Activated CD8-positive, alpha-beta T cell treated with anti-CD3 and anti-CD28 coated beads for 36 hours (primary cell): ENCODE measurements at regions of chr16 and their contacts with region 1.

Region 1: DNA sequence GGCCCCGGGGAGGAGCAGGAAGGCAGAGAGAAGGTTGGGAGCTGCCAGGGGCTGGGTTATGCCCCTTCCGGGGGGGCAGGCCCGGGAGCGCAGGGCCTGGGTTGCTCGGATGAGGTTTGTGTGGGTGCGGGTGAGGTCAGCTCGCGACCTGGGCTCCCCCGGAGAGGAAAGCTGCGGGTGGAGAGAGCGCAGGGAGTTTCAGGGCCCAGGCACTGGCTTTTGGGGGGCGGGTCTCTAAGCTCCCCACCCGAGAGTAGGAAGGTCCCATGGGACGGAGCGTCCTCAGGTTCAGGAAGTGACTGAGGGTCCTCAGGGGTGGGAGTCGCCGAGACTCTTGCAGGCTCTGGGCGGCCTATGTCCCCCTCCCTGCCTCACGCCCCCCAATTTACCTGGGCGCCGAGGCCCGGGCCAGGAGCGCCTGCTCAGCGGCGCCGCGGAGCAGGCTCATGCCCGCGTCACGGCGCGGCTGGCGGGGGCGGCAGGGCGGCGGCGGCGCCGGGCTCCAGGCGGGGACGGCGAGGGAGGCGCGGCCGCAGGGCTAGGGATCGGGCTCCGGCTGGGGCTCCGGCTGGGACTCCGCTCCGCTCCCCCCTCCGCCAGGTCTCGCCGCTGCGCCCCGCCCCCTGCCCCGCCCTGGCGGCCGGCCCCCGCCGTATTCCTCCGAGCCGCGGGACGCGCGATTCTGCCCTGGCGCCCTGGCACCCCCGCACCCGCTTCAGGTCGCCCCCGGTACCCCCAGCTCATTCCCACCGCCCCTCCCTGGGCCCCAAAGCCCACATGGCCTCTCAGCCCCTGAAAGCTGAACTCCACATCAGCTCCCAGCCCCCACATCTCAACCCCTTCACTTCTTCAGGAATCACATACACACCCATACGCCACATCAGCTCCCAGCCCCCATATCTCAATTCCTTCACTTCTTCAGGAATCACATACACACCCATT is at the start of gene DOK4:
- DNase-seq: peak; percentile 81
- ATAC-seq: peak; percentile 95
- H3K4me3 Mint-ChIP-seq: peak within 1 kb of the TSS; percentile 76
- H3K27ac Mint-ChIP-seq: peak within 1 kb of the TSS; percentile 79
- H3K4me1 Mint-ChIP-seq: peaks cover 22% of the 10 kb centered on the region
- H3K27me3 Mint-ChIP-seq: no peaks in the 10 kb centered on the region
- CTCF ChIP-seq: no peak
- total RNA-seq, gene DOK4: 4.6 to 5.1 TPM

Region 2: GRCh38 chr16:57462209-57462977 is 23.8 kb before region 1 on chr16 and contains the start of gene POLR2C:
- CTCF ChIA-PET with region 1: interaction called, 15 read pairs
- POLR2A ChIA-PET with region 1: interaction called, 47 read pairs
- intact Hi-C with region 1: no loop called
- DNase-seq: peak; percentile 95
- ATAC-seq: peak; percentile 98
- H3K4me3 Mint-ChIP-seq: peak within 1 kb of the TSS; percentile 99
- H3K27ac Mint-ChIP-seq: peak within 1 kb of the TSS; percentile 100
- H3K4me1 Mint-ChIP-seq: peaks cover 25% of the 10 kb centered on the region
- H3K27me3 Mint-ChIP-seq: no peaks in the 10 kb centered on the region
- CTCF ChIP-seq: peak; percentile 99
- total RNA-seq, gene POLR2C: 62.4 to 63.0 TPM

Region 3: DNA sequence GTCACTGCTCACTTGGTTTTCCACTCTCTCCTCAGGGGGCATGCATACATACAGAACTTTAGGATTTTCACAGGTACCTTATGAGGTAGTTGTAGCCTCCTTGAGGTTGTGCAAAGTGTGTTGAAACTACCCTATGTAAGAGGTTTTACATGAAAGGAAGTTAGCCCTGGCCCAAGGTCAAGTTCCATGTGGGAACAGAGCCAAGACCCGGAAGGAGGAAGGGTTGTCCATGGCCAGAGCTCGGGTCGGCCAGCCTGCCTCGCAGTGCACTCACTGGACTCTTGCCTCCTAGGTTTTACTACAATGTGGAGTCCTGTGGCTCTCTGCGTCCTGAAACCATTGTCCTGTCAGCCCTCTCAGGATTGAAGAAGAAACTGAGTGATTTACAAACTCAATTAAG is 15.5 kb before region 1 on chr16:
- CTCF ChIA-PET with region 1: interaction called, 20 read pairs
- POLR2A ChIA-PET with region 1: interaction called, 47 read pairs
- intact Hi-C with region 1: no loop called
- DNase-seq: no peak
- ATAC-seq: no peak
- H3K4me3 Mint-ChIP-seq: no peak overlapping the region
- H3K27ac Mint-ChIP-seq: no peak overlapping the region
- H3K4me1 Mint-ChIP-seq: peaks cover 7% of the 10 kb centered on the region
- H3K27me3 Mint-ChIP-seq: no peaks in the 10 kb centered on the region
- CTCF ChIP-seq: no peak

Region 4: GRCh38 chr16:57475711-57476339 is 10.4 kb before region 1 on chr16:
- CTCF ChIA-PET with region 1: interaction called, 20 read pairs
- POLR2A ChIA-PET with region 1: interaction called, 22 read pairs
- intact Hi-C with region 1: no loop called
- DNase-seq: peak; percentile 93
- ATAC-seq: peak; percentile 98
- H3K4me3 Mint-ChIP-seq: peak overlapping the region; percentile 22
- H3K27ac Mint-ChIP-seq: peak overlapping the region; percentile 48
- H3K4me1 Mint-ChIP-seq: peaks cover 15% of the 10 kb centered on the region
- H3K27me3 Mint-ChIP-seq: no peaks in the 10 kb centered on the region
- CTCF ChIP-seq: peak; percentile 97

Region 5: DNA sequence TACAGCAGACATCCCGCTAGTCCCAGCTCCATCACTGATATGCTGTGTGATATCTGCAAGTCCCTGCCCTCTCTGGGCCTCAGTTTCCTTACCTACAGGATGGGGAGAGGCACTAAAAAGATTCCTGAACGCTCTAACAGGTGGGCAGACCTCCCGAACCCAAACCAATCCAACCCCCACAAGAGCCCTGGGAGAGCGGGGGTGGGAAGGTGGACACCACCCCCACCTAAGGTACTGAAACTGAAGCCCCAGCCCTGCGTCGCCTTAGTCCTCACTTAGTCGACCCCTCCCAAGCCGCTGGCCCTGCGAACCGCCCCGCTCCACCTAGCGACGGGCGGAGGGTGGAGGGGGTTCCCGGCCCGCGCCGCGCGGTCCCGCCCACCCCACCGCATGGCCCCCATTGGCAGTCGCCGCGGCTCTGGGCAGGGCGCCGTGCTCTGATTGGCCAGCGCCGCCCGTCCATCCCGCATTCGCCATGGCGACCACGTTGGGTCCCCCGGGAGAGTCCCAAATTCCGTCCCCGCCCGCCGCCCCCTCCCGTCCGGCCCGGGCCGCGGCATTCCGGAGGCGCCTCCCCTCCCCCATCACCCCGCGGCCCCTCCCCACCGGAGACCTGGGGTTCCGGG is 49.6 kb after region 1 on chr16:
- CTCF ChIA-PET with region 1: interaction called, 8 read pairs
- POLR2A ChIA-PET with region 1: interaction called, 3 read pairs
- intact Hi-C with region 1: loop called (anchors 5 kb)
- DNase-seq: peak; percentile 95
- ATAC-seq: peak; percentile 78
- H3K4me3 Mint-ChIP-seq: peak overlapping the region; percentile 81
- H3K27ac Mint-ChIP-seq: peak overlapping the region; percentile 92
- H3K4me1 Mint-ChIP-seq: peaks cover 73% of the 10 kb centered on the region
- H3K27me3 Mint-ChIP-seq: no peaks in the 10 kb centered on the region
- CTCF ChIP-seq: no peak